Right ventricle myocardium inferior (tissue), 1 donor: ENCODE measurements at regions of chr18 and their contacts with region 1.

Region 1: DNA sequence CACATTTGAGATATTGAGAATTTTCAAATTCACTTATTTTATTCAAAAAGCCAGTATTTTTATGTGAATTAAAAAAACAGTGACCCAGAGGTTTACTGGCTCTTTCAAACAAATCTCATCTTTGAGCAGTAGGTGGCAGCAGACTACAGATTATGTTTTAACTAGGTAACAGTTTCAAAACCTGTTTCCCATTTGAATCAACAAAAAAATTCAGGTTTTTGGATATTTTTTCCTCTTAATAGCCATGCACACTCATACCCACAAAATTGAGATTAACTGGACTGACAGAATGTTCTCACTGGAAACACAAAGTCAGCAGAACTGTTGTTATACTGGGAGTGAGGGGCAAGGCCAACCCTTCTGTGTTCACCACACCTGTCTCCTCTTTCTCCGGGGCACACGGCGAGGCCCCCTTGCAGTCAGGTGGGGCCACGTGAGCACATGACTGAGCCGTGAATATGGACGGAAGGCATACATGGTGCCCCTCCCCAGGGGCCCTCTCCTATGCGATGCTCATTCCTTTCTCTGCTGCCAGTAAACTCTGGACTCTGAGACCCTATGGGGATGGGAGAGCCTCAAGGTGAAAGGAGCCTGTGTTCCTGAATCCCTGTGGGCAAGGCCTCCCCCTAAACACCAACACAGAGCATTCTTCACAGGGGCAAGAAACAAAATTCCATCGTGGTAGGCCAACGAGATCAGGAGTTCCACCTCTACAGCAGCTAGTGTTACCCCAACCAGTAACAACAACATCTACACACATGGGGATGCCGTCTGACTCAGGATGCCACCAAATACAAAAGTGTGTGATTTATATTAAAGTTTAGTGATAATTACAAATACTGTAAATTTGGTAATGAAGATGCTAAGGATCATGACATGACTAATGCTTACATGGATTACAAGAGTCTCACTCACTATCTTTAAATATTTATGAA is 80.4 kb downstream of the LPIN2 start:
- DNase-seq: no peak
- ATAC-seq: no peak

Region 2: DNA sequence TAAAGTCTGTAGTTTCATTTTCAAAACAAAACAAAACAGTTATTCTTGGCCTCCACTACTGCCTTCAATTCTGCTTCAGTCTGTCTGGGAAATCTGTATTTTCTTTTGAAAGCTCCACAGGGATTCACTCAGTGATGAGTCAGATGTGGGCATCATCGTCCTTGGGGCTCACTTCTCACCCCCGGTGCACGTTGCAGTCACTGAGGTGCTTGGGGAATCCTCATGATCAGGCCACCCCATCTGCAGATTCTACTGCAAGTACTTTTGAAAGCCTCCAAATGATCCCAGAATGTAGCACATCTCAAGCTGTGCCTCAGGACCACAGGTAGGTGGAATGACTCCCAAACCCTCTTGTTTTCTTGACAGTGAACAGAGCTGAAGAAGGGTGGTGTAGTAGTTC is 46.1 kb after region 1 on chr18:
- intact Hi-C with region 1: loop called (anchors 5 kb)
- DNase-seq: no peak
- ATAC-seq: peak; percentile 16

Region 3: GRCh38 chr18:3062798-3063680 is 130.5 kb after region 1 on chr18:
- intact Hi-C with region 1: loop called (anchors 1 kb)
- DNase-seq: peak; percentile 86
- ATAC-seq: peak; percentile 65

Region 4: DNA sequence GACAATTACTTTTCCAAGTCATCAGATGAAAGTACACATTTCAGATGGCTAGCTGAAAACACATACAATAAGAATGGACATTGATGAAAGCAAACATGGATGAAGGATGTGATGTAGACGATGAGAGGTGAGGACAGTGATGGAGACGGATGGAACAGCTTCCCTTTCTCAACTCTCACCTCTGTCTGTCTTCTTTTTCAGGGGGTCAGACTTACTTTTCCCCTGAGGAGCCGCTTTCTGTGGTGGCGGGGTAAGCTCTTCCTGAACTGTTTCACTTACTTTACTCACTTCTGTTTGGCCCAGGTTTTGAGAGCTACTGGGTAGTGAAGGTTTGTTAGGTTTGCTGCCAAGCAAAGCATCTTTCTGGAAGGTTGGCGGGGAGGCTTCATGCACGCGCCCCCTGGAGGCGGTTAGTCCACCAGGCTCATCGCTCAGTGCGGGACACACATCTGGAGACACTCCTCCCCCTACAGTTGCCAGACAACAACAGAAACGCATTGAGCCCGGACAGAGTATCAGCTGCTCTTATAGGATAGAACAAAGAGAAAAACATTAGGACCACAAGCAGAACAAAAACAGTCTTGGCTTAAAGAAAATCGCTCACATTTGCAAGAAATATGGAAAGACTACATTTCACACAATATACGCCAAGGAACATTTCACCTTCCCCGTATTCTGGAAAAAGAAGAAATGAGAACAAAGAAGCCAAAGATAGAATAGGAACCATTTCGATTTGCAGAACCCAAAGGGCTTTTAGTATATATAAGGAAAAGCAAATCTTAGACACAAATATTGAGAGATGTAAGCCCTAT is 196.7 kb after region 1 on chr18:
- intact Hi-C with region 1: loop called (anchors 5 kb)
- DNase-seq: peak; percentile 88
- ATAC-seq: peak; percentile 84